ENCODE measurements at regions of chr6 and their contacts with region 1.

Region 1: DNA sequence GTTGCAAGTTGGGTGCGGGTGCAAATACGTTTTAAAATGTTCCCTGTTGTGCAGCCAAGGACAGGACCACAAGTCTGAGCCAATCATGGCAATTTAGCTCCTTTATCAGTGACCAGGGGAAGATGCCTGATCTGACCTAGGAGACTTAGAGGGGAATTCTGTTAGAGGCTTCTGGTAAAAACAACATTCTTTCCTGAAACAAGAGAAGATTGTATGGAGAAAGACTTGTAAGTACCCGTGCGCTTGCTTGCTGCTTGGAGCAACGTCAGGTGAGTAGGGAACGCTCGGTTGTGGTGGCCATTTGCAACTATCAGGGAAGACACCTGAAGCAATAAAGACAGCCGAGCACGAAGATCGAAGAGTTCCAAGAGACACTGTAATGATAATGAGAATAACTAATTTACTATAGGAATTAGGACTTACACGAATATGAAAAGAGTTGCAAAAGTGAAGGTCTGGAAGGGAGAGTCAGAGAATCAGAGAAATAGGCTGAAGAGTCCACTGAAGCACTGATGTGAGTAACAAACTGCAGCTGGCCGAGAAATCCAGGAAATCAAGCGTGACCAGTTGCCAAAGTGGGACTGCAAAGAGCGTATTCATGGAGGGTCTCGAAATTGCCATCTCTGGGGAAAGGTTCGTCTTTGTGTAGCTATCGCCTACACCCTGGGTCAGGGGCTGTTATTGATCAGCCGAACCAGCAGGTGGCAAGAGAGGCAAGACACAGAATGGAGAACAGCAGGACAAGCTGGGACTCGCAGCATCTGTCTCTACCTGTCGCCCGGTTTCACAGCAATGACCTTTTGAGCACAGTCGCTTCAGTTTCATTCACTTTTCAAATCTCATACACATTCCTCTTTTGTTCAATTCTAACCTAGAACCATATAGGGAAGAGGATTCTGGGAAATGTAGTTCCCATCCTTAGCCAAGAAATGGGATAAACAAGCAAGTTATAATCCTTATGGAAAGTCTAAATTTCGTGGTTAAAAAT is 26.1 kb downstream of the LOC128125822 start:
- DNase-seq: peak; percentile 81
- H3K4me3 Mint-ChIP-seq: peak overlapping the region; percentile 77
- H3K27ac Mint-ChIP-seq: peak overlapping the region; percentile 64
- H3K4me1 Mint-ChIP-seq: peaks cover 23% of the 10 kb centered on the region
- H3K27me3 Mint-ChIP-seq: peaks cover 6% of the 10 kb centered on the region

Region 2: DNA sequence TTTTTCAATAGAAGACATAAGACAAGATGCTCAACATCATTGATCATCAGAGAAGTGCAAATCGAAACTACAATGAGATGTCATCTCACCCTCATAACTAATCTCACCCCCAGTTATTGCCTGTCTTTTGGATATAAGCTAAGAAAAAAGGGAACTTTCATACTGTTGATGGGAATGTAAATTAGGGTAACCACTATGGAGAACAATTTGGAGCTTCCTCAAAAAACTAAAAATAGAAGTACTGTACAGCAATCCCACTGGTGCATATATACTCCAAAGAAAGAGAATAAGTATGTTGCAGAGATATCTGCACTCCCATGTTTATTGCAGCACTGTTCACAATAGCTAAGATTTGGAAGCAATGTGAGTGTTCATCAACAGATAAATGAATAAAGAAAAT is 10.9 kb after region 1 on chr6:
- CTCF ChIA-PET with region 1: interaction called, 12 read pairs
- POLR2A ChIA-PET with region 1: no interaction called
- DNase-seq: no peak
- H3K4me3 Mint-ChIP-seq: no peak overlapping the region
- H3K27ac Mint-ChIP-seq: no peak overlapping the region
- H3K4me1 Mint-ChIP-seq: no peaks in the 10 kb centered on the region
- H3K27me3 Mint-ChIP-seq: peaks cover 13% of the 10 kb centered on the region

Region 3: GRCh38 chr6:63635588-63636517 is 37.5 kb after region 1 on chr6 and contains the start of gene PHF3:
- CTCF ChIA-PET with region 1: interaction called, 18 read pairs
- POLR2A ChIA-PET with region 1: no interaction called
- DNase-seq: peak; percentile 90
- H3K4me3 Mint-ChIP-seq: peak within 1 kb of the TSS; percentile 93
- H3K27ac Mint-ChIP-seq: peak within 1 kb of the TSS; percentile 97
- H3K4me1 Mint-ChIP-seq: peaks cover 44% of the 10 kb centered on the region
- H3K27me3 Mint-ChIP-seq: no peaks in the 10 kb centered on the region
- total RNA-seq, gene PHF3: 43.8 to 57.5 TPM

Region 4: DNA sequence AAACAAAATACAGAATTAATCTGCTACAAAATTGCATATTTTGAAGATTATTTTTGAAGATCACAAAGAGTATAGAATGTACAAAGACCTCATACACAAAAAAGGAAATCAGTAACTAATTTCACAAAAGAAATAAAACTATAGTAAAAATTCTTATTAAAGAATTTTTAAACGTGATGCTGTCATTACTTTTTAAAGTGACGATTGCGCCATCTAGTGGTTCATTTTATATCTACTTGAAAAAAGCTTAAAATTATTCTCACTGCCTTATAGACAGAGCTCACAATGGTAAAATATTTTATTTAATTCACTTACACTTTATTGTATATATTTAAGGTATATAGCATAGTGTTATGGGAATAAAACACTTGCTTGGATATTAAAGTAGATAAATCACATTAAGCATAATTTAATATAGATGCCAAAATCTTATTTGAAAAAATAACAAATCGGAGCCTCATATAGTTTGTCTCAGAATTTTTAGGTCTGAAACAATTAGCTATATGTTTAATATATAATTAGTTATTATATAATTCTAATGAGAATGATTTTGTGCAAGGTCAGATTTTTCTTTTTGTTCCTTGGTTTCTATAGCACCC is 166.1 kb after region 1 on chr6:
- CTCF ChIA-PET with region 1: interaction called, 18 read pairs
- POLR2A ChIA-PET with region 1: no interaction called
- DNase-seq: peak; percentile 22
- H3K4me3 Mint-ChIP-seq: no peak overlapping the region
- H3K27ac Mint-ChIP-seq: no peak overlapping the region
- H3K4me1 Mint-ChIP-seq: no peaks in the 10 kb centered on the region
- H3K27me3 Mint-ChIP-seq: peaks cover 20% of the 10 kb centered on the region